Heart right ventricle (tissue), 16 donors: ENCODE measurements at regions of chr5 and their contacts with region 1.

Region 1: GRCh38 chr5:149636851-149637246 is 55.6 kb downstream of the ARHGEF37 start:
- DNase-seq: peak in 1 of 2 donors; percentile 87
- ATAC-seq: peak; percentile 45 to 72 (median 56)
- H3K4me3 ChIP-seq: no peak overlapping the region
- H3K27ac ChIP-seq: no peak overlapping the region
- H3K4me1 ChIP-seq: peaks cover 13 to 45% (median 27%) of the 10 kb centered on the region in 9 donors
- H3K27me3 ChIP-seq: no peaks in the 10 kb centered on the region
- CTCF ChIP-seq: peak; percentile 65 to 90 (median 86)

Region 2: DNA sequence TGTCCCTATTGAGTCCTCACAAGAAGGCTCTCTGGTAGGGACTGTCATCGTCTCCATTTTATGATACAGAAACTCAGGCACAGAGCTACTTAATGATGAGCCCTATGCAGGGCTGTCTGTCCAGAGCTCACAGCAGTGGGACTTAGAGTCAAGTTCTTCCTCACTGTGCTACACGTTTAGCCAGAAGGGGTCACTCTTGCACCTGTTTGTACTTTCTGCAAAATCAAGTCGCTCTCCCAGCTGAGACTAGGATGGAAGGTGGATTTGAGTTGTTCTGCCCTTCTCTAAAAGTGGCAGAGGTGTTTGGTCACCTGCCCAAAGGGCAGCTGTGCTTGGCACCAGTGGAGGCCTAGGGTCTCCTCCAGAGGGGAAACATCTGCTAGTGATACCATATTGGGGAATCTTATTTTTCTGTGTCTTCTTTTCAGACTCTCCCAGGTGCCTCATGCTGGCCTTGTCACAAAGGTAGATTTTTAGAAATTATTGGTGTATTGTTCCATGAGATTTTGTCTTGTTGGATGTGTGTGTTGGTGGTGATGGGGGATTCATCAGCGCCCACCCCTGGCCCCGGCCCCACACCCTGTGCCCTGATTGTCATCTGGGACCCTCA is 197.5 kb after region 1 on chr5:
- intact Hi-C with region 1: loop called in 7 of 10 experiments (anchors 2 to 5 kb)
- DNase-seq: peak in 1 of 2 donors; percentile 67
- ATAC-seq: peak in 7 of 8 donors; percentile 9 to 44 (median 38)
- H3K4me3 ChIP-seq: no peak overlapping the region
- H3K27ac ChIP-seq: no peak overlapping the region
- H3K4me1 ChIP-seq: peaks cover 3 to 57% (median 12%) of the 10 kb centered on the region in 9 donors
- H3K27me3 ChIP-seq: no peaks in the 10 kb centered on the region
- CTCF ChIP-seq: peak; percentile 26 to 75 (median 63)

Region 3: GRCh38 chr5:149852641-149853330 is 215.9 kb after region 1 on chr5:
- intact Hi-C with region 1: loop called in 5 of 10 experiments (anchors 1 to 5 kb)
- DNase-seq: peak; percentile 61 to 80
- ATAC-seq: peak in 7 of 8 donors; percentile 33 to 80 (median 62)
- H3K4me3 ChIP-seq: no peak overlapping the region
- H3K27ac ChIP-seq: peak overlapping the region in 3 of 10 donors; percentile 9 to 54 (median 37)
- H3K4me1 ChIP-seq: peaks cover 0 to 21% (median 11%) of the 10 kb centered on the region in 9 donors
- H3K27me3 ChIP-seq: no peaks in the 10 kb centered on the region
- CTCF ChIP-seq: peak; percentile 64 to 93 (median 89)